ENCODE measurements at regions of chr5 and their contacts with region 1.

Region 1: DNA sequence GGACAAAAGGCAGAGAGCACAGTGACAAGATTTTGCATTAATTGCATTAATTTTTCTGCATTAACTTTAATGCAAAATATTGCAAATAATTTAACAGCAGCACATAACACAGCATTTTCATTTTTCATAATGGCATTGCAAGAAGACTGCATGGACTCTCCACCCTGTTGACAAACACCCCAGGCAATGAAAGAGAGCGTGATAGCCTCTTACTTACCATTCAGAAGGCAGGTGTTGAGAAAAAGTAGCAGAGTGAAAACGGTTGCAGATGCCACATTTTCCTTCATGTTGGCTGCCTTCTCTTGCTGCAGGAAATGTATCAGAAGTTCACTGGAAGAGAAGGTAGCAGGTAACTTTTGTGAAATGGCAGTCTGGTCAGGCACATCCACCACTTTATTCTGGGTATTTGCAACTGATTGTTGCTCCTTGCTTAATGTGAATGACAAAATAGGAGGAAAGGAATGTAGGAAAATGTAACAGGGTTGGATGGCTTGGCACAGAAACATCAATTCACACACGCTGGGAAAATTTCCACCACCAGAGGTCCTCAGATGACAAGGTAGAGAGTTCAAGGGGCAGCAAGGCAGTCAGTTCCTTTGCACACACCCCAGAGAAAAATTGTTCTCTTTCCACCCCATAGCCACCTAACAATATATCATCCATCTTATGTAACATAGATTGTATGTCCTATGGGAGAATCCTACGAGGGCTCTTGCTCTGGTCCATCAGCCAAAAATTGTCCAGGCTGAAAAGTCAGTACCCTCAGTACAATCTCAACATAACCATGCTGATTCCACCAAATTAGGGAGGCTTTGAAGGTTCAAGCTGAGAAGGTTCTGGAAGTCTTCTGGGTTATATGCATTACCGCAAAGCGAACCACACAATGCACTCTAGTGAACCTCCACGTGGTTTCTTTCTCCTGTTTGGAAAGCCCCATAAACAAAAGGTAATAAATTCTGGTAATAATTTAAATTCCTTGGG is 41.9 kb upstream of the AGXT2 start:
- DNase-seq: peak; percentile 29 to 84
- H3K4me3 ChIP-seq: no peak overlapping the region
- H3K27ac ChIP-seq: no peak overlapping the region
- H3K4me1 ChIP-seq: peaks cover 0 to 4% (median 1%) of the 10 kb centered on the region in 4 experiments; a peak in 2 of 7 replicates
- H3K27me3 ChIP-seq: 0 out of 7 replicates have a peak, but pooled peaks cover 0 to 2% (median 0%) of the 10 kb centered on the region in 4 experiments
- CTCF ChIP-seq: peak; percentile 65 to 94 (median 84)
- EP300 ChIP-seq: no peak
- POLR2A ChIP-seq: no peak
- RAD21 ChIP-seq: peak; percentile 99

Region 2: DNA sequence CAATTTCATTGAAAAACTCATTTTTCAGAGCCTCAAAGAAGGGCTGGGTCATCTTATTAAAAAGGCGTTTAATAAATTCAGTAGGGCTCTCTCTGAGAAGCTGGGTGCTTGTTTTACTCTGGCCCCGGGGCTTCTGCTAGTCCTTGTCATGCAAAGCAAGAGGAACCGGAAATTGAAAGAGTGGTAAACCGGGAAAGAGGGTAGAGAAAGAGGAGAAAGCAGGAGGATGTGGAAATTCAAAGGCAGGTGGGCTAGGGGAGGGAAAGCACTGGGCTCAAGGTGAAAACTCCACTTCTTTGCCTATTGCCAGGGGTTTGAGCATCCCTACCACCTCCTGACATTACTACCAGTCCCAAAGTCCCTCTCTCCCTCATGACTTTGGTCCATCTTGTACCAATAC is 22.7 kb after region 1 on chr5:
- CTCF ChIA-PET with region 1: no interaction called
- POLR2A ChIA-PET with region 1: no interaction called
- DNase-seq: no peak
- H3K4me3 ChIP-seq: no peak overlapping the region
- H3K27ac ChIP-seq: no peak overlapping the region
- H3K4me1 ChIP-seq: peaks cover 0 to 3% (median 0%) of the 10 kb centered on the region in 4 experiments; a peak in 2 of 7 replicates
- H3K27me3 ChIP-seq: no peaks in the 10 kb centered on the region
- CTCF ChIP-seq: no peak
- EP300 ChIP-seq: no peak
- POLR2A ChIP-seq: no peak
- RAD21 ChIP-seq: no peak

Region 3: DNA sequence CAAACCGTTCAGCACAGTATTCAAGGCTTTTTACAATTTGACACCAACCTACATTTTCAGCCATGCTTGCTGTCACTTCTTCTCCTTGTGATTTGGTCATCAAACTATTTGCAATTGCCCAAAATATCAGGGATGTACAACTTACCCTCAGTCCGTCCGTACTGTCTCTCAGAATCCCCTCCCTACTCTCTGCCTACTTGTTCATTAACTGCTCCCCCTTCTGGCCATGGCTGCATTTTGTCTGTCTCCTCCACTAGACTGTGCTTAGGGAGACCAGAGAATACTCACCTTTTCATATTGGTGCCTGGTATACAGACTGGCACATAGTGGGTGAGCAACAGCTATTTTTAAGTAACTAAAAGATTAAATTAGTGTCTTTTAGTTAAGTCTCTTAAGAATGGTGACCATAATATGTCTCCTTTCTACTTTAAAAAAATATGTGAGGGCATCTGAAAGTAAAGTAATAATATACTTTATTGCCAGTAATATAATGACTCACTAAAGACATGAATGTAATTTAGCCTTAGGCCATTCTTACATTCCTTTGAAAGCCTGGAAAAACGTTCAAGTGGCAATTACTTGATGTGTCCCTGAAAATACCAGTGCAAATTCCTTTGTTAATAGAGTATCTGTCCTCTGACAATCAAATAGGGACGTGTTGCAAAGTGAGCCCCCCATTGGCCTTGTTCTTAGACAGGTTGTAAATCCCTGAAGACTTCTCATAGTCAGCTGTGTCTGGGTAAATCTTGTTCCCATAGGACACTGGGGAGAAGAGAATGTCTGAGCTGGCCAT is 112.9 kb after region 1 on chr5:
- CTCF ChIA-PET with region 1: interaction called, 16 read pairs
- POLR2A ChIA-PET with region 1: no interaction called
- DNase-seq: peak; percentile 25 to 78
- H3K4me3 ChIP-seq: no peak overlapping the region
- H3K27ac ChIP-seq: no peak overlapping the region
- H3K4me1 ChIP-seq: no peaks in the 10 kb centered on the region
- H3K27me3 ChIP-seq: no peaks in the 10 kb centered on the region
- CTCF ChIP-seq: peak; percentile 38 to 83 (median 63)
- EP300 ChIP-seq: no peak
- POLR2A ChIP-seq: no peak
- RAD21 ChIP-seq: peak; percentile 66 to 68

Region 4: GRCh38 chr5:35598707-35599370 is 509.2 kb after region 1 on chr5:
- CTCF ChIA-PET with region 1: interaction called, 10 read pairs
- POLR2A ChIA-PET with region 1: no interaction called
- DNase-seq: peak; percentile 46 to 59
- H3K4me3 ChIP-seq: no peak overlapping the region
- H3K27ac ChIP-seq: no peak overlapping the region
- H3K4me1 ChIP-seq: no peaks in the 10 kb centered on the region
- H3K27me3 ChIP-seq: no peaks in the 10 kb centered on the region
- CTCF ChIP-seq: peak in 2 of 3 experiments; percentile 67 to 92; a peak in 3 of 4 replicates
- EP300 ChIP-seq: no peak
- POLR2A ChIP-seq: no peak
- RAD21 ChIP-seq: peak; percentile 88 to 89